ENCODE measurements at regions of chr2 and their contacts with region 1.

Region 1: DNA sequence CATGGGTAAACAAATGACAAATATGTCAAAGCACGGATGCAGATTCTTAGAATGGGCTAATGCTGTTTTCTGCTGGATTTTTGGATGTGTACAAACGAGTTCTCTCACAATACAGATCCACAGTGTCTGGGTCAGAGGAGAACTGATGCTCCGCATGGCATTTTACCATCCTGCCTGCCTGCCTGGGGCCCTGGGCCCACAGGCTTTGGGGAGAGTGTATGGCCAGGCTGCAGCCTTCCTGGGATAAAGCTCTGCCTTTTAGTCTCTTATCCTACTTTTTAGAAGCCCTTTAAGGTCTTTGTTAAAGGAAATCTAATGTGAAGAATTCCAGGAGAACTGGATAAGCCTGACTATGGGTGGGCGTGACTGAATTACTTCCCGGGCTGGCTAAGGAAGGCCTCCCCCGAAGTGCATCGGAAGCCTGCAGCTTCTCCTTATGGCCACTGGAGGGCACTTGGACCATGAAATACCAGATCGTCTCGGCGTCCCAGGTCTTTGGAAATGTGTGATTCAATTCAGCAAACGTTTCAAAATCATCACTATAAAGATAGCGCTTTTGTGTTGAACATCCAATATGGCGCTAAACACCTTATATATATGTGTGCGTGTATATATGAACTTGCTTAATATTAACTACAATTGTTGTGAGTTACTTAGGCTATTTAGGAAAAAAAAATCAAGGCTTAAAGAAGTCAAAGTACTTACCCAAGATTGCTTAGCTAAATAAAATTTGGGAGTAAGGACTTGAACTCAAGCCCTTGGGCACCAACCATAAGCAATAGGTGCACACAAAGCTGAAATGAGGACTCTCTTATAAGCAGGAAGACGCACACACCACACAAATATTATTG is 15.2 kb upstream of the DNPEP start:
- DNase-seq: peak; percentile 87
- H3K4me3 ChIP-seq: no peak overlapping the region; a peak in 1 of 4 replicates
- H3K27ac ChIP-seq: no peak overlapping the region
- H3K4me1 ChIP-seq: peaks cover 20 to 22% of the 10 kb centered on the region in 2 experiments; a peak in 3 of 4 replicates
- H3K27me3 ChIP-seq: no peaks in the 10 kb centered on the region
- CTCF ChIP-seq: peak; percentile 97
- EP300 ChIP-seq: no peak
- RAD21 ChIP-seq: peak; percentile 96

Region 2: DNA sequence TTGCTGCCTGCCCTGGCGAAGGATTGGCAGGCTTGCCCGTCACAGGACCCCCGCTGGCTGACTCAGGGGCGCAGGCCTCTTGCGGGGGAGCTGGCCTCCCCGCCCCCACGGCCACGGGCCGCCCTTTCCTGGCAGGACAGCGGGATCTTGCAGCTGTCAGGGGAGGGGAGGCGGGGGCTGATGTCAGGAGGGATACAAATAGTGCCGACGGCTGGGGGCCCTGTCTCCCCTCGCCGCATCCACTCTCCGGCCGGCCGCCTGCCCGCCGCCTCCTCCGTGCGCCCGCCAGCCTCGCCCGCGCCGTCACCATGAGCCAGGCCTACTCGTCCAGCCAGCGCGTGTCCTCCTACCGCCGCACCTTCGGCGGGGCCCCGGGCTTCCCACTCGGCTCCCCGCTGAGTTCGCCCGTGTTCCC is 15.3 kb after region 1 on chr2 and contains the start of gene DES:
- CTCF ChIA-PET with region 1: interaction called, 46 read pairs
- POLR2A ChIA-PET with region 1: no interaction called
- DNase-seq: no peak
- H3K4me3 ChIP-seq: no peak within 1 kb of the TSS
- H3K27ac ChIP-seq: no peak within 1 kb of the TSS
- H3K4me1 ChIP-seq: no peaks in the 10 kb centered on the region; a peak in 1 of 4 replicates
- H3K27me3 ChIP-seq: no peaks in the 10 kb centered on the region
- CTCF ChIP-seq: no peak
- EP300 ChIP-seq: no peak
- RAD21 ChIP-seq: no peak
- polyA plus RNA-seq, gene DES: 0.21 and 0.28 TPM in 2 replicates

Region 3: DNA sequence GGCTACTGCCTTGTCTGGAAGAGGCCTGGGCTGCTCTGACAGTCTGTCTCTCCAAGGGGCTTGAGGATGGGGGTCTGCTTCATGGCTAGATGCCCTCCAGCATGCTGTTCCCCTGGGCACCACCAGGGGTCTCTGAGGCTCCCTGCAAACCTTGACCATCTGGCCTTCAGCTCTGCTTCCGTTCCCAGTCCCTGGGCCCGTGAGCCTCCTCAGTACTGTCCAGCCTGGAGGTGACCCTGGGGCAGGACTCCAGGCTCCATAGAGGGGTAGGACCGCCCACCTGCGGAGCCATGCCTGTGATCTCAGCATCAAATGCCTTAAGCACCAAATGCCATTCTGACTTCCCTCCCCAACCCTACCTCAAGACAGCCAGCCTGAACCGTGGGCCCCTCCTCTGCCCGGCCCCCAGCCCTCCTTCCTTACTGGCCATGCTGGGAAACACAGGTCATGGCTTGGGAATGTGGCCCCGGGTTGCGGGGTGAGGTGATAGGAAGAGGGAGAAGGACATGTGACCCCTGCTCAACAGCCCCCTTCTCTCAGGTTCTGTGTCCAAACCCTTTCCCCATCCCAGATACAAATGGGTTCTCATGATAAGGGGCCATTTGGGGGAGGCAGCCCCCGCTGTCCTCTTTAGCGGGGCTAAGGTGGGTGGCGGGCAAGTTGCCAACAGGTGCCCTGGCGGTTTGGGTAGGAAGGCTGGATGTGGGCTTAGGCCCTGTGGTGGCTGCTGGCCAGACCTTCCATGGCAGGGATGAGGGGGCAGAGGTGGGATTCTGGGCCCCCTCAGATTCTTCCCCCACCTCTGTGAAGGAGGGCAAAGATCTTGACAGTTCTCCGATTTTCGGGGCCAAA is 56.8 kb after region 1 on chr2:
- CTCF ChIA-PET with region 1: interaction called, 29 read pairs
- POLR2A ChIA-PET with region 1: interaction called, 4 read pairs
- DNase-seq: peak; percentile 88
- H3K4me3 ChIP-seq: no peak overlapping the region
- H3K27ac ChIP-seq: peak overlapping the region; percentile 29 to 92; a peak in 3 of 4 replicates
- H3K4me1 ChIP-seq: peaks cover 17 to 27% of the 10 kb centered on the region in 2 experiments
- H3K27me3 ChIP-seq: no peaks in the 10 kb centered on the region
- CTCF ChIP-seq: peak; percentile 87
- EP300 ChIP-seq: no peak
- RAD21 ChIP-seq: peak; percentile 77

Region 4: GRCh38 chr2:219492575-219492974 is 89.7 kb after region 1 on chr2:
- CTCF ChIA-PET with region 1: interaction called, 26 read pairs
- POLR2A ChIA-PET with region 1: no interaction called
- DNase-seq: no peak
- H3K4me3 ChIP-seq: no peak overlapping the region
- H3K27ac ChIP-seq: no peak overlapping the region
- H3K4me1 ChIP-seq: peaks cover 3 to 33% of the 10 kb centered on the region in 2 experiments; a peak in 3 of 4 replicates
- H3K27me3 ChIP-seq: no peaks in the 10 kb centered on the region
- CTCF ChIP-seq: no peak
- EP300 ChIP-seq: no peak
- RAD21 ChIP-seq: no peak

Region 5: GRCh38 chr2:219537657-219538488 is 135.0 kb after region 1 on chr2:
- CTCF ChIA-PET with region 1: interaction called, 39 read pairs
- POLR2A ChIA-PET with region 1: no interaction called
- DNase-seq: no peak
- H3K4me3 ChIP-seq: no peak overlapping the region
- H3K27ac ChIP-seq: no peak overlapping the region
- H3K4me1 ChIP-seq: peaks cover 7 to 19% of the 10 kb centered on the region in 2 experiments; a peak in 2 of 4 replicates
- H3K27me3 ChIP-seq: no peaks in the 10 kb centered on the region
- CTCF ChIP-seq: no peak
- EP300 ChIP-seq: no peak
- RAD21 ChIP-seq: no peak

Region 6: DNA sequence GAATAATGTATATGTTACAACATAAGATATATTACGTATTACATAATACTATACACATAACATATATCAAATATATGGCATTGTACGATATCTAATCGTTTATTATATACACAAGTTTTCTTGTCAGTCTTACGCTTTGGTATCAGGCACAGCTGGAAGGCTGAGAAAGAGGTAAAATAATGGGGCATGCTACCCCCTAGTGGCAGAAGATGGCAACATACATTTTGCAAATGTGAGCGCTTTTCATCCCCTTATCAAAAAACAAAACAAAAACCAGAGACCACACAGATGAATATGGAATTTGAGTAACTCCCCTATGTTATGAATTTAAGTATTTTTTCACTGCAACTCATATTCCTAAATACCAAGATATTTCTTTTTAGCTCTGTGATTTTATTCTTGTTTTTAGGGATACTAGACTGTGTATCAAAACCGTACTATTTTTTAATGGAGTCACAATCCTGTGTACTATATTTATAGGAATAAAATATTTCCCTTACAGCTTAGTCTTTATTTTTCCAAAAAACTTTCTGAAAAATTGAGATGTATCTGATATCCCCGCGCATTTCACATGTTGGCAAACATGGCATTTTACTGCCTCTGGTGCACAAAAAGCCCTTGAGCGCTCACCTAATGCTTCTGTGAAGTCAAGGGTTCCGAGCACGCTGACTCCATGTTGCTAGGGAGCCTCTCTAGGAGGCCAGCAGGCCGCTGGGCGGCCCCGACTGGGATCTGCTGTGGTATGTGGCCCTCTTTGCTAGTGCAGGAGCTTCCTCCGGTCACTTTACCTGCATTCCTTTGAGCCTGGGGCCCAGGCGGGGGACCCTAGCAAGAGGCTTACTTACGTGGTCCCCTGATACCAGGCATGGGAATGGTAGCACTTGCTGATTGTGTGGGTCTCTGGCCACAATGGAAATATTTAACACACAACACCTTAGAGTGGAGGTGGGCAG is 287.1 kb after region 1 on chr2:
- CTCF ChIA-PET with region 1: interaction called, 13 read pairs
- POLR2A ChIA-PET with region 1: no interaction called
- DNase-seq: peak; percentile 60
- H3K4me3 ChIP-seq: no peak overlapping the region
- H3K27ac ChIP-seq: no peak overlapping the region
- H3K4me1 ChIP-seq: peaks cover 2 to 7% of the 10 kb centered on the region in 2 experiments; a peak in 2 of 4 replicates
- H3K27me3 ChIP-seq: peaks cover 15% of the 10 kb centered on the region; the same call in 1 of the 2 replicates
- CTCF ChIP-seq: peak; percentile 79
- EP300 ChIP-seq: no peak
- RAD21 ChIP-seq: peak; percentile 80

Region 7: DNA sequence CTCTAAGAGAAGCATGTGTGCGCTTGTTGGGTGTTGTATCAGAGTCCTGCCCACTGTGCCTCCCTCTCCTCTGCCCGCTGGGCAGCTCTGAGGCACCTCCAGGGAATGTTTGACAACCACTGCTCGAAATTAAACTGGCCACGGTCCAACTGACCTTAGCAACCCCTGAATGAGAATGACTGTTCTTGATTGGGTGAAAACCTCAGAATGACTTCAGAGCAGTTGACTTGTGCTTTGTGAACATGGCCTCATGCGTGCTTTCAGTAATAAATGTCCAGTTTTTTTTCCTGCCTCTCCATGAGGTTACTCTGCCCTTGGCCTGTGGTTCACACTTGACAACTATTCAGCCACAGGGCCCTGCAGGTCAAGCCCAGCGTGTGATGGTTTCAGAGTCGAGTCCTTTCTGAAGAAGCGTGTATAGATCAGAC is 319.5 kb after region 1 on chr2:
- CTCF ChIA-PET with region 1: no interaction called
- POLR2A ChIA-PET with region 1: no interaction called
- DNase-seq: no peak
- H3K4me3 ChIP-seq: no peak overlapping the region
- H3K27ac ChIP-seq: no peak overlapping the region
- H3K4me1 ChIP-seq: no peaks in the 10 kb centered on the region
- H3K27me3 ChIP-seq: no peaks in the 10 kb centered on the region; the same call in 1 of the 2 replicates
- CTCF ChIP-seq: no peak
- EP300 ChIP-seq: no peak
- RAD21 ChIP-seq: no peak